ENCODE measurements at regions of chr4 and their contacts with region 1.

Region 1: GRCh38 chr4:15778289-15779241 is at the start of gene CD38:
- DNase-seq: peak; percentile 66 to 94 (median 90)
- H3K4me3 ChIP-seq: peak within 1 kb of the TSS; percentile 39 to 87 (median 79)
- H3K27ac ChIP-seq: peak within 1 kb of the TSS; percentile 28 to 69
- H3K4me1 ChIP-seq: peaks cover 15 to 53% (median 19%) of the 10 kb centered on the region in 4 experiments
- H3K27me3 ChIP-seq: peaks cover 0 to 33% (median 0%) of the 10 kb centered on the region in 5 experiments

Region 2: GRCh38 chr4:15756361-15756861 is 22.2 kb before region 1 on chr4:
- CTCF ChIA-PET with region 1: interaction called, 86 read pairs
- POLR2A ChIA-PET with region 1: interaction called, 10 read pairs
- DNase-seq: peak; percentile 94 to 99 (median 98)
- H3K4me3 ChIP-seq: peak overlapping the region in 5 of 7 experiments; percentile 16 to 72 (median 43)
- H3K27ac ChIP-seq: peak overlapping the region; percentile 13 to 30
- H3K4me1 ChIP-seq: peaks cover 20 to 50% (median 36%) of the 10 kb centered on the region in 4 experiments
- H3K27me3 ChIP-seq: no peaks in the 10 kb centered on the region

Region 3: GRCh38 chr4:15855804-15856475 is 77.4 kb after region 1 on chr4:
- CTCF ChIA-PET with region 1: no interaction called
- POLR2A ChIA-PET with region 1: no interaction called
- DNase-seq: no peak
- H3K4me3 ChIP-seq: no peak overlapping the region
- H3K27ac ChIP-seq: no peak overlapping the region
- H3K4me1 ChIP-seq: no peaks in the 10 kb centered on the region
- H3K27me3 ChIP-seq: no peaks in the 10 kb centered on the region

Measured in common myeloid progenitor, CD34-positive (primary cell).